Naive thymus-derived CD4-positive, alpha-beta T cell (primary cell): ENCODE measurements at regions of chr20 and their contacts with region 1.

Region 1: DNA sequence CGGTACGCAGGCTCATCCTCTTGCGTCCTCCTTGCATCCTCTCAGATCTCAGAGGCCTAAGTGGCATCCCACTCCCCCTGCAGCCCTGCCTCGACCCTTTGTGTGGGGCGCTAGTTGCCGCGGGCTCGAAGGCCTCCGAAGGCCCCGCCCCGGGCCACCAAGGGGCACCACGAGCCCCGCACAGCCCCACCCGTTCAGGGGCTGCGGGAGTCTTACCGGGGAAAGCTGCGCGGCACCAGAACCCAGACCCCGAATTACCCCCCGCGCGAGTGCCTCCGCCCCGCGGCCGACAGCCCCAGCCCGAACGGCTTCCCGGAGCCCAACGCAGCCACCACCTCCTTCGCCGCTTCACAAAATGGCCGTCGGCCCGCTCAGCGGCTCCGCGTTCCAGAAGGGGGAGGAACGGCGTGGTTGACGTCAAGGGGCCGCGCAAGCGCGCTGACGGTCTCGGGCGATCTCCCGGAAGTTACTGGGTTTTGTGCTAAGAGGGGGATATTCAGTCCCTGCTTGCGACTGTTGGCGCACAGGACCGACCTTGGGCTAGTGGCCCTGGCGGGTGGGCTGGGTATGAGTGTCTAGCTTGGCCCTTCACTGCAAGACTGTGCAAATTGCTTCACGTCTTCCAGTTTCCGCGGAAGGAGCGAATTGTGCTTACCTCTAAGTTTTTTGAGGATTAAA is at the starts of genes CPNE1 and RBM12:
- DNase-seq: peak; percentile 89 to 96 (median 96)
- ATAC-seq: peak; percentile 89
- H3K4me3 ChIP-seq: peak within 1 kb of the TSS; percentile 88
- H3K4me3 Mint-ChIP-seq: peak within 1 kb of the TSS; percentile 89 to 98 (median 96)
- H3K27ac ChIP-seq: peak within 1 kb of the TSS; percentile 100
- H3K27ac Mint-ChIP-seq: peak within 1 kb of the TSS; percentile 98 to 100 (median 99)
- H3K4me1 ChIP-seq: peaks cover 35 to 38% of the 10 kb centered on the region in 2 donors
- H3K4me1 Mint-ChIP-seq: peaks cover 32 to 49% (median 47%) of the 10 kb centered on the region in 7 donors
- H3K27me3 ChIP-seq: no peaks in the 10 kb centered on the region
- H3K27me3 Mint-ChIP-seq: no peaks in the 10 kb centered on the region
- total RNA-seq, gene CPNE1: 250 to 378 (median 305) TPM
- total RNA-seq, gene RBM12: 98.2 to 122 (median 114) TPM

Region 2: DNA sequence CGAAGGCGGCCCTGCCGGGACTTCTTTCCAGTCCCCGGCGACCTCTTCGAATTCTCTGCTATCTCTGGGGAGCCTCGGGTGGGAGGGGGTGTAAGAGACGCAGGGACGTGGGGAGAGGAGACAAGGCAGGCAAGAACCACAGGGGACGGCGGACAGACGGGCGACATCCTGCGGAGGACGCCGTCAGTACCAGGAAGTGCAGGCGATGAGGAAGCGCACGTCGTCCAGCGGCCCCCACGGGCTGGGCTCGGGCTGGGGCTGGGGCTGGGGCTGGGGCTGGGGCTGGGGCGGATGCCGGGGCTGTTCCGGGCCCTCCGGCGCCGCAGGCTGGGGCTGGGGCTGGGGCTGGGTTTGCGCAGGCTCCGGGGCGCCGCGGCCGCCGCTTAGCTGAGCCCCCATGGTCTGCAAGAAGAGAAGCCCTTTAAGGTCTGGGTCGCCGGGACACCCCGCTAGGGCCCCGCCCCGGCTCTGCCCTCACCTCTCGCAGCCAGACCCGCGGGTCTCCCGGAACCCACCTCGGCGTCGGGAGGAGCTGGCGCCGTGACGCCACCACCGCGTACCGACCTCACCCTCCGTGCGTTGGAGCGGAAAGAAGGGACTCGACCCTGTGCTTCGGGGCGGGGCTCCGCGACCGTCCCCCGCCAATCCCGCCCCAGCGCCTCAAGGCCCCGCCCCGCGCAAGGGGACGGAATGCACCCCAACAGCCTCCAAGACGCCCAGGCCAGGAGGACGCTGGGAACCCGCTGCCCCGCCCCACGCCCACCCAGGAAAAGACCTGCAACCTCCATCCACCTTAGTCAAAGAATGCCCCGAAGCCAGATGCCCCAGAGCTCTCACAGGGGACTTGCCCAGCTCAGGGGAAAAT is 386.9 kb before region 1 on chr20 and contains the start of gene MMP24OS:
- CTCF ChIA-PET with region 1: no interaction called
- POLR2A ChIA-PET with region 1: no interaction called
- intact Hi-C with region 1: loop called in 1 of 2 experiments (anchors 5 kb)
- DNase-seq: peak; percentile 77 to 90 (median 87)
- ATAC-seq: peak; percentile 95
- H3K4me3 ChIP-seq: peak within 1 kb of the TSS; percentile 99
- H3K4me3 Mint-ChIP-seq: peak within 1 kb of the TSS; percentile 84 to 97 (median 96)
- H3K27ac ChIP-seq: peak within 1 kb of the TSS; percentile 96
- H3K27ac Mint-ChIP-seq: peak within 1 kb of the TSS; percentile 95 to 99 (median 98)
- H3K4me1 ChIP-seq: peaks cover 11 to 18% of the 10 kb centered on the region in 2 donors
- H3K4me1 Mint-ChIP-seq: peaks cover 9 to 46% (median 28%) of the 10 kb centered on the region in 7 donors
- H3K27me3 ChIP-seq: no peaks in the 10 kb centered on the region
- H3K27me3 Mint-ChIP-seq: no peaks in the 10 kb centered on the region
- total RNA-seq, gene MMP24OS: 43.8 to 88.6 (median 69.4) TPM

Region 3: DNA sequence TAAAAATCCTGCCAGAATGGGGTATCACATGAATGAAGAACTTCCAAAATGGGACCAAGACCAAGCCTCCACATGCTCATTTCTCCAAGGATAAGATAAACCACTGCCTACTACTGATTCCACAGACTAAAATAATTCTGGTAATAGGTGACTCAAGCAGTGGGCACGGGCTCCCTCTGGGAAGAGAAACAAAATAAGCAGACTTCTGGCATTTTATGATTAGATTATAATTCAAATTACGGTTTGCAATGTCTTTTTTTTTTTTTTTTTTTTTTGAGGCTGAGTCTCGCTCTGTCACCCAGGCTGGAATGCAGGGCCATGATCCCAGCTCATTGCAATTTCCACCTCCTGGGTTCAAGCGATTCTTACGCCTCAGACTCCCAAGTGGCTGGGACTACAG is 269.0 kb before region 1 on chr20:
- CTCF ChIA-PET with region 1: no interaction called
- POLR2A ChIA-PET with region 1: no interaction called
- intact Hi-C with region 1: no loop called
- DNase-seq: no peak
- ATAC-seq: no peak
- H3K4me3 ChIP-seq: no peak overlapping the region
- H3K4me3 Mint-ChIP-seq: no peak overlapping the region
- H3K27ac ChIP-seq: no peak overlapping the region
- H3K27ac Mint-ChIP-seq: peak overlapping the region in 1 of 9 donors; percentile 57
- H3K4me1 ChIP-seq: no peaks in the 10 kb centered on the region
- H3K4me1 Mint-ChIP-seq: peaks cover 6 to 48% (median 35%) of the 10 kb centered on the region in 7 donors
- H3K27me3 ChIP-seq: no peaks in the 10 kb centered on the region
- H3K27me3 Mint-ChIP-seq: no peaks in the 10 kb centered on the region

Region 4: DNA sequence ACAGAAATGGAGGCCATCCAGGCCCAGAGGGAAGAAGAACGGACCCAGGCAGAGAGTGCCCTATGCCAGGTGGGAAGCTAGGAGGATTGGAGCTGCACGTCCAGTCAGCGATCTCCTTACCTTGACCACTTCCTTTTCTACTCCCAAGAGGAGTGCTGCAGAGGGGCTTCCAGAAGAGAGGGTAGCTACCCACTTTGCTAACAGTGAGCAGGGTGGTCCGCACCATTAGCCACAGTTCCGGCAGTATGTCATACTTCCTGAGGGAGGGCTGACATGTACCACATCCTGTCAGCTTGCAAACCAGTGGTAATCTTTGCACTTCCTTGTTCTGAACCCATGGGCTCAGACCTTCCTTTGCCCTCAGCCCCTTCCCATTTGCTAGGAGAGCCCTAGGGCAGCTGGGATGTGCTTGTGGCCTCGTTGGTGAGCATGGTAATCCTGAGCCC is 173.9 kb before region 1 on chr20:
- CTCF ChIA-PET with region 1: no interaction called
- POLR2A ChIA-PET with region 1: interaction called, 11 read pairs
- intact Hi-C with region 1: loop called in 1 of 2 experiments (anchors 1 kb)
- DNase-seq: peak; percentile 27 to 77 (median 67)
- ATAC-seq: peak; percentile 99
- H3K4me3 ChIP-seq: peak overlapping the region; percentile 92
- H3K4me3 Mint-ChIP-seq: peak overlapping the region; percentile 99 to 100 (median 99)
- H3K27ac ChIP-seq: peak overlapping the region; percentile 84
- H3K27ac Mint-ChIP-seq: peak overlapping the region; percentile 98 to 100 (median 99)
- H3K4me1 ChIP-seq: peaks cover 23 to 27% of the 10 kb centered on the region in 2 donors
- H3K4me1 Mint-ChIP-seq: peaks cover 47 to 92% (median 72%) of the 10 kb centered on the region in 7 donors
- H3K27me3 ChIP-seq: no peaks in the 10 kb centered on the region
- H3K27me3 Mint-ChIP-seq: no peaks in the 10 kb centered on the region

Region 5: DNA sequence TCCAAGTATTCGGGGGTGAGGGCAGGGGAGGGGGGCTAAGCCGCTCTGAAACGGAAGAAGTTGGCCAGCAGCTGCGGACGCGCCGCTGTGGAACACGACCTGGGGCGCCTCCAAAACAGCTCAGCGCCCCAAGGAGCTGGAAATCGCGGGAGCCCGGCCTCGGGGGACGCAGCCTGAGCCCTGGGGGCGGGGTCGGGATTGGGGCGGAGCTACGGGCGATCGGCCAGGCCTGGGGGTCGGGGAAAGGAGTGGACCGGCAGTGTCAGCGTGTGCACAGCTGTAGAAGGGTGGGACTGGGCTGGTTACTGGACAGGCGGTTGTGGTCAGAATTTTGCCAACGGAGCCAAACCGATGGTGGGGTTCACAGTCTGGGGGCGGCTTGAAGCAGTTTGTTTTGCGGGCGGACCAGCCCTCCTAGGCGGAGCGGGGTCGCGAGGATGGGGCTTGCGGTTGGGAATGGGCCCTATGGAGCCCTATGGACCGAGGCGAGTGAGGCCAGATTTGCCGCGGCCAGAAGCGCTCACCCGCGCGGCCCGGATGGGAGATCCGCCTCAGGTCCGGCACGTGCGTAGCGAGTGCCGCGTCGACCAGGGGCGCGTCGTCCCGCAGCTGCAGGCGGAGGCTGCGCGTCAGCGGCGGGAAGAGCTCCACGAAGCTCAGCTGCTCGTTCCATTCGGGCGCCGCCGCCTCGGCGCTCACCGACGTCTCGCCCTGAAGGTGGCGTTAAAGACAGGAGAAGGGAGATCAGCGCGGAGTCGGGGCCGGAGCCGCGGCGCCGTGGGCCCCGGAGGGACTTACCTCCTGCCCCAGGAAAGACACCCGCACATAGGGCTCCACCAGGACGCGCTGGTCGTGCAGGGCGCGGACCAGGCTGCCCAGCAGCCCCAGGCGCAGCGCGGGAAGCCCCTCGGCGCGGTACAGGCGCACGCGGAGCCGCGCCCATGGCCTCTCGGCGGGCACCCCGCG is 63.4 kb before region 1 on chr20:
- CTCF ChIA-PET with region 1: no interaction called
- POLR2A ChIA-PET with region 1: interaction called, 9 read pairs
- intact Hi-C with region 1: loop called (anchors 1 kb)
- DNase-seq: peak; percentile 66 to 82 (median 77)
- ATAC-seq: peak; percentile 95
- H3K4me3 ChIP-seq: peak overlapping the region; percentile 72
- H3K4me3 Mint-ChIP-seq: peak overlapping the region; percentile 72 to 84 (median 80)
- H3K27ac ChIP-seq: peak overlapping the region; percentile 36
- H3K27ac Mint-ChIP-seq: peak overlapping the region in 1 of 9 donors; percentile 10
- H3K4me1 ChIP-seq: peaks cover 5 to 6% of the 10 kb centered on the region in 2 donors
- H3K4me1 Mint-ChIP-seq: peaks cover 0 to 11% (median 6%) of the 10 kb centered on the region in 7 donors
- H3K27me3 ChIP-seq: peaks cover 0 to 5% of the 10 kb centered on the region in 2 donors
- H3K27me3 Mint-ChIP-seq: peaks cover 0 to 65% (median 5%) of the 10 kb centered on the region in 5 donors

Region 6: GRCh38 chr20:35648836-35649235 is 15.8 kb before region 1 on chr20:
- CTCF ChIA-PET with region 1: no interaction called
- POLR2A ChIA-PET with region 1: interaction called, 9 read pairs
- intact Hi-C with region 1: loop called in 1 of 2 experiments (anchors 2 kb)
- DNase-seq: no peak
- ATAC-seq: no peak
- H3K4me3 ChIP-seq: no peak overlapping the region
- H3K4me3 Mint-ChIP-seq: peak overlapping the region in 1 of 10 donors; percentile 3
- H3K27ac ChIP-seq: no peak overlapping the region
- H3K27ac Mint-ChIP-seq: peak overlapping the region in 5 of 9 donors; percentile 8 to 79 (median 61)
- H3K4me1 ChIP-seq: peaks cover 0 to 15% of the 10 kb centered on the region in 2 donors
- H3K4me1 Mint-ChIP-seq: peaks cover 45 to 79% (median 78%) of the 10 kb centered on the region in 7 donors
- H3K27me3 ChIP-seq: no peaks in the 10 kb centered on the region
- H3K27me3 Mint-ChIP-seq: no peaks in the 10 kb centered on the region

Region 7: GRCh38 chr20:35699127-35699975 is 34.7 kb after region 1 on chr20 and contains the starts of genes NFS1 and ROMO1:
- CTCF ChIA-PET with region 1: no interaction called
- POLR2A ChIA-PET with region 1: interaction called, 7 read pairs
- intact Hi-C with region 1: loop called (anchors 1 to 2 kb)
- DNase-seq: peak; percentile 71 to 87 (median 82)
- ATAC-seq: peak; percentile 92
- H3K4me3 ChIP-seq: peak within 1 kb of the TSS; percentile 89
- H3K4me3 Mint-ChIP-seq: peak within 1 kb of the TSS; percentile 90 to 99 (median 98)
- H3K27ac ChIP-seq: peak within 1 kb of the TSS; percentile 87
- H3K27ac Mint-ChIP-seq: peak within 1 kb of the TSS; percentile 95 to 99 (median 97)
- H3K4me1 ChIP-seq: peaks cover 13 to 16% of the 10 kb centered on the region in 2 donors
- H3K4me1 Mint-ChIP-seq: peaks cover 15 to 66% (median 52%) of the 10 kb centered on the region in 7 donors
- H3K27me3 ChIP-seq: no peaks in the 10 kb centered on the region
- H3K27me3 Mint-ChIP-seq: no peaks in the 10 kb centered on the region
- total RNA-seq, gene NFS1: 18.2 to 41.1 (median 35.0) TPM
- total RNA-seq, gene ROMO1: 33.2 to 85.5 (median 38.5) TPM

Region 8: DNA sequence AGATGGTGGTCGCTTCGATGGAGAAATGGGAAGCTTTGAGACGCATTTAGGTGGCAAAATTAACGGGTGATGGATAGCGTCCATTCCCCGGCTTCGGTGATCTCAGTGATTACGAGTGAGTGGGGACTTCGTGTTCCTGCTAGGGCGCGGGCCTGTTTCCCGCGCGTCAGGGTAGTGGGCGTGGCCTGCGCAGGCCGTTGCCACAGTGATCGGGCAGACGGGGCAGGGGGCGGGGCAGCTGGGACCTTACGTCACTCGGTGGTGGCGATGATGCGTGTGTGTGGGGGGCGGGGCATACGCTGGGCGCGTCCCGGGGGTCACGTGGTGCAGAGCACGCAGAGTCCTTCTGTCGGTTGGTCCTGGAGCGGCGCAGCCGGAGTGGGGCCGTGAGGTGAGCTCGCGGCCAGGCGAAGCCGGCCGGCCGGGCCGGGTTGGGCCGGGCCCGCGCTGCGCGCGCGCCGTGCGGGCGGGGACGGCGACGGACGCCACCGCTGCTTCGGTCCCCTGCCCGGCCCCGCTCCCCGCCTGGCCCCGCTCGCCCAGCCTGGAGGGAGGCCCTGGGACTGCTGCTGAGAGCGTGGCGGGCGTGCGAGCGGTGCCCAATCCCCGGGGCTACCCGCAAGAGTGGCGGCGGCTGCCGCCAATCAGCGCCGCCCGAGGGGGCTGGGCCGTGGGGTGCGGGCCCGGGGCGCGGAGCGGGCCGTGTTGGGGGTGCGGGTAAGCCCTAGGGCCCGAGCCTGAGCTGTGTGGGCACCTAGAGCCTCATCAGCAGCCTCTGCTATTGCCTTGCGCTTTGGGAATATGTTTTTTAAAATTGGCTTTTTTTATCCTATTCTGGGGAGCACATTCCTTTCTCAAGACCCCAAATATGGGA is 107.2 kb after region 1 on chr20 and contains the start of gene PHF20:
- CTCF ChIA-PET with region 1: no interaction called
- POLR2A ChIA-PET with region 1: interaction called, 18 read pairs
- intact Hi-C with region 1: loop called (anchors 1 kb)
- DNase-seq: peak; percentile 98 to 100 (median 99)
- ATAC-seq: peak; percentile 90
- H3K4me3 ChIP-seq: peak within 1 kb of the TSS; percentile 59
- H3K4me3 Mint-ChIP-seq: peak within 1 kb of the TSS; percentile 84 to 97 (median 94)
- H3K27ac ChIP-seq: peak within 1 kb of the TSS; percentile 98
- H3K27ac Mint-ChIP-seq: peak within 1 kb of the TSS; percentile 96 to 100 (median 100)
- H3K4me1 ChIP-seq: peaks cover 76 to 78% of the 10 kb centered on the region in 2 donors
- H3K4me1 Mint-ChIP-seq: peaks cover 52 to 88% (median 74%) of the 10 kb centered on the region in 7 donors
- H3K27me3 ChIP-seq: no peaks in the 10 kb centered on the region
- H3K27me3 Mint-ChIP-seq: no peaks in the 10 kb centered on the region
- total RNA-seq, gene PHF20: 57.5 to 157 (median 78.0) TPM

Region 9: GRCh38 chr20:35978041-35978513 is 313.4 kb after region 1 on chr20:
- CTCF ChIA-PET with region 1: no interaction called
- POLR2A ChIA-PET with region 1: no interaction called
- intact Hi-C with region 1: no loop called
- DNase-seq: no peak
- ATAC-seq: peak; percentile 49
- H3K4me3 ChIP-seq: no peak overlapping the region
- H3K4me3 Mint-ChIP-seq: no peak overlapping the region
- H3K27ac ChIP-seq: no peak overlapping the region
- H3K27ac Mint-ChIP-seq: no peak overlapping the region
- H3K4me1 ChIP-seq: no peaks in the 10 kb centered on the region
- H3K4me1 Mint-ChIP-seq: peaks cover 0 to 4% (median 0%) of the 10 kb centered on the region in 7 donors
- H3K27me3 ChIP-seq: no peaks in the 10 kb centered on the region
- H3K27me3 Mint-ChIP-seq: peaks cover 0 to 4% (median 0%) of the 10 kb centered on the region in 5 donors